Activated CD4-positive, alpha-beta T cell treated with anti-CD3 and anti-CD28 coated beads for 36 hours (primary cell): ENCODE measurements at regions of chr6 and their contacts with region 1.

Region 1: DNA sequence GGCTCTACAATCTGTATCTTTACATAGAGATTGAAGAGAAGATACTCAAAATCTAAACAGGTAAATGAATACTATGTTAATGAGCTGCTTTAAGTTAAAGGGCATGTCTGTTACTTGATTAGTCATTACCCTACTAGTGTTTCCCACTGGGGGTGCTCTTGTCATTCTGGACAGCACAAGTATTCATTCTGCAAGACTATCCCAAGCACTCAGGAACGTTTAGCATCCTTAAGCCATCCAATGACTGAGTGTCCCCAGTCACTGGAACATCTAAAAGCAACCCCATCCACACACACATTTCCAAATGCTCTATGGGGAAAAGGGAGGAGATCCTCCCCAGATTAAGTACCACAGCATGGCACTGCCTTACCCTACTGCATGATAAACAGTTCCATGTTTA is 25.7 kb downstream of the EZR start:
- DNase-seq: no peak
- ATAC-seq: peak; percentile 74
- H3K4me3 Mint-ChIP-seq: no peak overlapping the region
- H3K27ac Mint-ChIP-seq: peak overlapping the region; percentile 53
- H3K4me1 Mint-ChIP-seq: peaks cover 87% of the 10 kb centered on the region
- H3K27me3 Mint-ChIP-seq: no peaks in the 10 kb centered on the region

Region 2: DNA sequence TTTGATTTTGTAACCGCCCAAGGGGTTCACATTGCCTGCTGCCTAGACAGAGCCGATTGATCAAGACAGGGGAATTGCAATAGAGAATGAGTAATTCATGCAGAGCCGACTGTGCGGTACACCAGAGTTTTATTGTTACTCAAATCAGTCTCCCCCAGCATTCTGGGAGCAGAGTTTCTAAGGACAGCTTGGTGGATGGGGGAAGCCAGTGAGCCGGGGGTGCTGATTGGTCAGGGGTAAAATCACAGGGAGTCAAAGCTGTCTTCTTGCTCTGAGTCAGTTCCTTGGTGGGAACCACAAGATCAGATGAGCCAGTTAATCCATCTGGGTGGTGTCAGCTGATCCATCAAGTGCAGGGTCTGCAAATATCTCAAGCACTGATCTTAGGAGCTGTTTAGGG is 85.7 kb after region 1 on chr6:
- CTCF ChIA-PET with region 1: no interaction called
- POLR2A ChIA-PET with region 1: no interaction called
- intact Hi-C with region 1: loop called in 1 of 2 experiments (anchors 1 kb)
- DNase-seq: peak; percentile 85
- ATAC-seq: peak; percentile 97
- H3K4me3 Mint-ChIP-seq: no peak overlapping the region
- H3K27ac Mint-ChIP-seq: peak overlapping the region; percentile 71
- H3K4me1 Mint-ChIP-seq: peaks cover 18% of the 10 kb centered on the region
- H3K27me3 Mint-ChIP-seq: no peaks in the 10 kb centered on the region